GM23248 (cell line): ENCODE measurements at regions of chr9 and their contacts with region 1.

Region 1: DNA sequence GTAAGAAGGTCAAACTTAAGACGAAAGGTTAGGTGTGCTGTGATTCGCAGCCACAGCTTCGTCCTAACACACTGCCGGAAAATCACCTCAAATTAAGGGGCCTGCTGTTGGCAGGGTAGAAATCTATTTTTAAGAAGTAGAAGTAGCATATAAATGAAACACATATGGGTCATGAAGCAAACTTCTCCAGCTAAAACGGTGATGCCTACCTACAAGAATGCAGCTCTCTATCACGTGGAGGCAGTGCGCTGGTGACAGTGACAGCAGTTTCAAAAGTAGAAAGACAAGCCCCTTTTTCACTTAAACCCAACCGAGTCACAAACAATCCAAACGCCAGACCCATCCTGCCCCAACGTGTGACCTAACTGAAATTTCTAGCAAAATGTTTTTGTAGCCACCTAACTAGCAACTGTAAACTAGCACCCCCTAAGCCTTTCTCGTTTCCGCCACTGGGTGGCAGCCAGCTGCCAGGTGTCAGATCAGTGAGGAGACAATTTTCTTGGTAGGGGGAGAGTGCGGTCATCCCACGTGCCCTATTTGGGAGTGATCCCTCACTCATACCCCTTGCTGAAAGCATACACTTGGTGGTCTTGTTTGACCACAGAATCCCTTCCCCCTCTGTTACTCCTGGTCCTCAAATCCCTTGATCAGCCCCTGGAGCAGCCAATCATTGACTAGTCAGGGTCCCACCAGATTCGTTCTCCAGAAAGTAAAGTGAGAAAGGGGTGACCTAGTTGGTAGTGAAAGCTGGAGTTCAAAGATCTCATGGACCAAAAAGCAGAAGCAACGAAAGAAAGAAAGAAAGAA is 71.8 kb upstream of the MAMDC2 start:
- DNase-seq: peak; percentile 83
- H3K4me3 ChIP-seq: peak overlapping the region; percentile 55
- H3K27ac ChIP-seq: peak overlapping the region; percentile 60
- H3K4me1 ChIP-seq: peaks cover 34% of the 10 kb centered on the region
- H3K27me3 ChIP-seq: no peaks in the 10 kb centered on the region

Region 2: DNA sequence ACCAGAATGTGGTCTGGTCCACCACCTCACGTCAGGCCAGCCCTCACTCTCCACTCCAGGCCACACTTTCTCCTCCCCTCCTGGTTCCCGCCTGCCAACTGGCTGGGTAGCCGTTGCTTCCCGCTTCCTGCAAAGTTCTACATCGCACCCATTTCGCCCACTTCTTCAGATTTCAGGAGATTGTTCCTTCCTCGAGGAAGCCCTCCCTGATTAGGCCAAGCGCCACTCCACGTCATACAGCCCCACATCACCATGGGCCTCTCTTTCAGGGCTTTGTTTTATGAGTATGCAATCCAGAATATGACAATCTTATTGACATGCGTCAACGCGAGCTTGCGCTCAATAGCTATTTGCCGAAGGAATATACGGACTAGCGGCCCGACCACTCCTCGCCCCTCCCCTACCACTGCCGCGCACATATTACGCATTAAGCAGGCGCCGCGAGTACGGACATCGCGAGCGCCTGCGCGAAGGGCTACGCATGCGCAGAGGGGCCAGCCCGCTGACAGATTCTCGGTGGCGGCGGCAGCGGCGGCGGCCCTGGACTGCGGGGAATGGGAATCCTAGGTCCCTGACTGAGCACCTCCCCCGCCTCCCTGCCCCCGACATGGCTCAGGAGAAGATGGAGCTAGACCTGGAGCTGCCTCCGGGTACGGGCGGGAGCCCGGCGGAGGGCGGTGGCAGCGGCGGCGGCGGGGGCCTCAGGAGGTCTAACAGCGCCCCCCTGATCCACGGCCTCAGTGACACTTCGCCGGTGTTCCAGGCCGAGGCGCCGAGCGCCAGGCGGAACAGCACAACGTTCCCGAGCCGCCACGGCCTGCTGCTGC is 1192.1 kb before region 1 on chr9:
- in situ Hi-C with region 1: no loop called
- DNase-seq: peak; percentile 96
- H3K4me3 ChIP-seq: peak overlapping the region; percentile 89
- H3K27ac ChIP-seq: peak overlapping the region; percentile 85
- H3K4me1 ChIP-seq: peaks cover 32% of the 10 kb centered on the region
- H3K27me3 ChIP-seq: no peaks in the 10 kb centered on the region

Region 3: DNA sequence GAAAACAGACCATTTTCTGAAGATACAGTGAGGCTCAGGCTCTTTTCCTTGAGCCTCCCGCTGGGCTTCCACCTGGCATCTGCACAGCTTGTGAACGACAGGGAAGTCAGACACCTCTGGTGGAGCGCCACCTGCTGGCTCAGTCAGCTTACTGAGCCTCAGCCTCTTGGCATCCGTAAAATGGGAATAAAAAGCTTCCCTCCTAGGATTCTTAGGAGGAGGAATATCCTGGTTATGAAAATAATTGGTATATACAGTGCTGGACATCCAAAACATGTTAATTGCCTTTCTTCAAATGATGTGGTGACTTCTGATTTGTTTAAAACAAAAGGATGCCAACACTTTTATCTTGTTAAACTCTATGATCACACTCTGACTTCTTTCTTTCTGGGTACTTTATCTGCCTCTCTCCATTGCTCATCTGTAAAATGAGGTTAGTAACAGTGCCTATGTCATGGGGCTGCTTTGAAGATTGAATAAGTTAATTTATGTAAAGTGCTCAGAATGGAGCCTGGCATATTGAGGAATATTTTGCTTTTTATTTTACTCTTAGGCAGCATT is 139.3 kb after region 1 on chr9:
- in situ Hi-C with region 1: loop called (anchors 5 kb)
- DNase-seq: peak; percentile 75
- H3K4me3 ChIP-seq: no peak overlapping the region
- H3K27ac ChIP-seq: no peak overlapping the region
- H3K4me1 ChIP-seq: peaks cover 7% of the 10 kb centered on the region
- H3K27me3 ChIP-seq: no peaks in the 10 kb centered on the region

Region 4: GRCh38 chr9:70229579-70229978 is 257.7 kb after region 1 on chr9:
- in situ Hi-C with region 1: loop called (anchors 25 kb)
- DNase-seq: peak; percentile 69
- H3K4me3 ChIP-seq: no peak overlapping the region
- H3K27ac ChIP-seq: no peak overlapping the region
- H3K4me1 ChIP-seq: 0 out of 2 replicates have a peak, but pooled peaks cover 4% of the 10 kb centered on the region
- H3K27me3 ChIP-seq: no peaks in the 10 kb centered on the region